Pancreas (tissue), 10 donors: ENCODE measurements at regions of chr6 and their contacts with region 1.

Region 1: GRCh38 chr6:129659590-129660345 is 50.2 kb downstream of the ARHGAP18 start:
- DNase-seq: no peak
- ATAC-seq: peak in 2 of 4 donors; percentile 11 to 18
- H3K4me3 ChIP-seq: peak overlapping the region in 1 of 4 donors; percentile 2
- H3K27ac ChIP-seq: no peak overlapping the region
- H3K4me1 ChIP-seq: peaks cover 12 to 52% (median 28%) of the 10 kb centered on the region in 3 donors
- H3K27me3 ChIP-seq: no peaks in the 10 kb centered on the region
- CTCF ChIP-seq: no peak

Region 2: DNA sequence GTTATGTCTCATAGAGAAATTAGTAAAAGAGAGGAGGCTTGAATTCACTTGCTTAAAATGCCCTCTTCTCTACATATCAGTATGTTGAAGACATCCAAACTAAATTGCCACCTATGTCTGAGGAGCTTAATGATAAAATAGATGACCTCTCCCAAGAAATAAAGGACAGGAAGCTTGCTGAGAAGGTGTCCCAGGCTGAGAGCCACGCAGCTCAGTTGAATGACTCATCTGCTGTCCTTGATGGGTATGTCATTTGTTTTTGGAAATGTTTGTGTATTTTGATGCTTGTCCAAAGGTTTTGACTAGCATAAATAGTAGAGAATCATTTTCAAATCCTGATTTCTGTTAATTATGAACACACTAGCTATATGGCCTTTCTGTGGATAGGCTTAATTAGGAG is 257.5 kb before region 1 on chr6:
- intact Hi-C with region 1: no loop called
- DNase-seq: no peak
- ATAC-seq: no peak
- H3K4me3 ChIP-seq: no peak overlapping the region
- H3K27ac ChIP-seq: no peak overlapping the region
- H3K4me1 ChIP-seq: no peaks in the 10 kb centered on the region
- H3K27me3 ChIP-seq: no peaks in the 10 kb centered on the region
- CTCF ChIP-seq: no peak

Region 3: GRCh38 chr6:129709769-129710449 is 50.1 kb after region 1 on chr6 and contains the start of gene ARHGAP18:
- intact Hi-C with region 1: loop called in 1 of 3 experiments (anchors 10 kb)
- DNase-seq: peak; percentile 88 to 96 (median 92)
- ATAC-seq: peak; percentile 94 to 98 (median 97)
- H3K4me3 ChIP-seq: peak within 1 kb of the TSS; percentile 31 to 63 (median 50)
- H3K27ac ChIP-seq: peak within 1 kb of the TSS; percentile 69 to 95 (median 84)
- H3K4me1 ChIP-seq: peaks cover 0 to 16% (median 5%) of the 10 kb centered on the region in 3 donors
- H3K27me3 ChIP-seq: no peaks in the 10 kb centered on the region
- CTCF ChIP-seq: no peak
- total RNA-seq, gene ARHGAP18: 22.9 to 41.0 (median 29.6) TPM

Region 4: DNA sequence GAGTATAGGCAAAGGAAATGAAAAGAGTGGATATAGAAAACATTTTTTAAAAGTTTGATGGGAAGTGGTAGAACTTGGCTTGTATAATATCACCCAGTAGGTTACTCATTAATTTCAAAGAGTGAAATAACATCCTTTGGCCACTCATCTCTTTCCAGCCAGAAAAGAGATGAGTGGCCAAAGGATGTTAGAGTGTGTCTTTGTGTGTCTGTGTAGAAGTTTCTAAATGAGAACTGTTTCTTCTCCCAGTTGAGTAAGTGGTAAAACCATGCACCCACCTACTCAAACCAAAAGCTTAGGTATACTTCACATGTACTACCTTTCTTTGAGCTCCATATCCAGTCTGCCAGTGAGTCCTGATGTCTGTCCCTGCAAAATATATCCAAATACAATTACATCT is 249.1 kb after region 1 on chr6:
- intact Hi-C with region 1: no loop called
- DNase-seq: no peak
- ATAC-seq: no peak
- H3K4me3 ChIP-seq: no peak overlapping the region
- H3K27ac ChIP-seq: no peak overlapping the region
- H3K4me1 ChIP-seq: no peaks in the 10 kb centered on the region
- H3K27me3 ChIP-seq: no peaks in the 10 kb centered on the region
- CTCF ChIP-seq: no peak